Activated naive CD4-positive, alpha-beta T cell treated with anti-CD3 and anti-CD28 coated beads for 36 hours (primary cell): ENCODE measurements at regions of chr16 and their contacts with region 1.

Region 1: DNA sequence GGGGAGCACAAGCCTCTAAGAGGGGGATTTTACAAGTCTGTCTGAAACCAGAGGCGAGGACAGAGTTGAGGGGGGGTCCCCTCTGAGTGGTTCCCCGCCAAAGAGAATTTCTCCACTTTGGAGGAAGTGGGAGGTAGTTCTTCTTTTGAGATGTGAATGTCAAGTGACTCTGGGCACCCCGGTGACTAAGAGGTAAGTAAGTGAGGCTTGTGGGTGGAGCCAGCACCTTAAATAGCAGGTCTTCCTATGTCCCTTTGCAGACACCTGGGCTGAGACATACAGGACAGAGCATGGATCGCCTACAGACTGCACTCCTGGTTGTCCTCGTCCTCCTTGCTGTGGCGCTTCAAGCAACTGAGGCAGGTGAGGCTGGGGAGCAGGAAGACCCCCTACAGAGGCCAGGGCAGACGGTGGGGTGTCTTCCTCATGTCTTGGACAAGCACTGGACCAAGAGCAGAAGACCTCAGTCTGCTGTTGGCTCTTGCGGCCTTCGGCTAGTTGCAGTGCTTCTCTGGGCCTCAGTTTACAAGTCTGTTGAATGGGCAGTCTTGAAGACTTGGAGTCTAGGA is at the start of gene CCL22:
- DNase-seq: peak; percentile 69
- H3K4me3 Mint-ChIP-seq: no peak within 1 kb of the TSS
- H3K27ac Mint-ChIP-seq: no peak within 1 kb of the TSS
- H3K4me1 Mint-ChIP-seq: peaks cover 11% of the 10 kb centered on the region
- H3K27me3 Mint-ChIP-seq: no peaks in the 10 kb centered on the region
- total RNA-seq, gene CCL22: 0.72 to 1.0 TPM

Region 2: DNA sequence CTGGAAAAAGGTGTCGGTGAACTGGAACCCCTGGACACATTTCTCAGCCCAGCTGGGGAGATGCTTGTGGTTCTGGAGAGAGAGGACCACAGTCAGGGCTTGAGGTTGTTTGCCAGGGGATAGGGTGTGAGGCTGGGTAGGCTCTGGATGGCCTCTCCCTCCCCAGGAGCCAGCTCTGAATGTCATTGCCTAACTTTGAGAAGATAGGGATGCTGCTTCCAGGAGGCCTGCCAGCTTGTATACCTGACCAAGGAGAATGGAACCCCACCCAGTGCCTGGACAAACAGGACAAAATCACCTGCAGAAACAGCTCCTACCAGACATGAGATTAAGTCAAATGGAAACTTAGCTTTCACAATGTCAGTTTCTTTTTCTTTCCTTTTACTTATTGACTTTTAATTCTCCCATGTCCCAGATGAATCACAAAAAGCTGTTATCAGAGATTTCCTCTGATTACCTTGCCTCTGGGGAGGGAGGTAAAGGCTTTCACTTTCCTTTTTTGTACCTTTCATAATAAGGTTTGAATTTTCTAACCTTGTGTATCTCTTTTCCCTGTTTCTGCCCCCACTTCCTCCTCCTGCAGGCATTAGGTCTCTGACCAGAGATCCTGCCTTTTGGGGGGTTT is 44.3 kb before region 1 on chr16:
- CTCF ChIA-PET with region 1: no interaction called
- intact Hi-C with region 1: loop called (anchors 1 kb)
- DNase-seq: no peak
- H3K4me3 Mint-ChIP-seq: no peak overlapping the region
- H3K27ac Mint-ChIP-seq: peak overlapping the region; percentile 13
- H3K4me1 Mint-ChIP-seq: peaks cover 19% of the 10 kb centered on the region
- H3K27me3 Mint-ChIP-seq: no peaks in the 10 kb centered on the region